Dendritic cell treated with granulocyte-macrophage colony-stimulating factor and Interleukin-4, amounts not matched to agents 40 ng/mL and 50 ng/mL, for 4 days (primary cell): ENCODE measurements at regions of chr4 and their contacts with region 1.

Region 1: GRCh38 chr4:7067452-7068278 is at the start of gene GRPEL1:
- H3K4me3 Mint-ChIP-seq: peak within 1 kb of the TSS; percentile 89
- H3K27ac Mint-ChIP-seq: peak within 1 kb of the TSS; percentile 92
- H3K4me1 Mint-ChIP-seq: peaks cover 46% of the 10 kb centered on the region
- H3K27me3 Mint-ChIP-seq: peaks cover 22% of the 10 kb centered on the region

Region 2: GRCh38 chr4:6716018-6716911 is 351.4 kb before region 1 on chr4 and contains the start of gene BLOC1S4:
- intact Hi-C with region 1: loop called (anchors 1 kb)
- H3K4me3 Mint-ChIP-seq: peak within 1 kb of the TSS; percentile 98
- H3K27ac Mint-ChIP-seq: peak within 1 kb of the TSS; percentile 97
- H3K4me1 Mint-ChIP-seq: peaks cover 34% of the 10 kb centered on the region
- H3K27me3 Mint-ChIP-seq: peaks cover 3% of the 10 kb centered on the region

Region 3: DNA sequence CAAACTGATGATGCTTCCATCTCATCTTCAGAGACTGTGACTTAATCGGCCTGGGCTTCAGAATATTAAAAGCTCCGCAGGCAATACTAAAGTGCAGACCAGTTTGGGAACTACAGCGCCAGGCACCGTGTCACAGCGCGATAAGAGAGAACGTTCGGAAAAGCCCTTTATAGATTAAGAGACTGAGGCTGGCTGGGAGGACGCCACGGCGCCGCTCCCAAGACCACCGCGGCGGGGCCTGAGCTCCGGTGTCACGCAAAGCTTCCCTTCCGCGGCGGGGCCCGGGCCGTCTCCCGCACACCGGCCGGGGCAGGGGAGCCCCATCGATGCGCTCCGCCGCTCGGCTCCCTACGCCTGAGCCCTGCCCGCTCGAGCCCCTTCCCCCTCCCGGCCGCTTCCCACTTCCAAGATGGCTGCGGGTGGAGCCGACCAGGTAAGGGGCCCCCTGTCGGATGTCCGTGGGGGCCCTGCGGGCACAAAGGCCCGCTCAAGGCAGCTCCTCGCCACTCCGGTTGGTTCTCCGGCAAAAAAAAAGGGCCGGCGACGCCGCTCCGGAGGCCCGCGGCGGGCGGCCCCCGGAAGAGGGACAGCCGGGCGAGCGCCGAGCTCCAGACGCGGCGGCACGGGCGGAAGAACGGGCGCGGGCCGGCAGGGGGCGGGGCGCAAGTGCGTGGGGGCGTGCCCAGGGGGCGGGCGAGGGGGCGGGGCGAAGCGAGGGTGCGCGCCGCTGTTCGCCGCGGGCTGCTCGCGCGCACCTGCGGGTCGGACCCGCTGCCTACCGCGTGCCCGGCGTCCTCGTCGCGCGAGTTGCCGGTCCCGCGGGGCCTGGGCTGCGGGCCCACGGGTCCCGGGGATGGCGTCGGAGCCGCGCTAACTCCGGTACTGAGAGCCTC is 158.3 kb before region 1 on chr4 and contains the start of gene TBC1D14:
- intact Hi-C with region 1: loop called (anchors 5 kb)
- H3K4me3 Mint-ChIP-seq: peak within 1 kb of the TSS; percentile 96
- H3K27ac Mint-ChIP-seq: peak within 1 kb of the TSS; percentile 98
- H3K4me1 Mint-ChIP-seq: peaks cover 76% of the 10 kb centered on the region
- H3K27me3 Mint-ChIP-seq: peaks cover 13% of the 10 kb centered on the region

Region 4: DNA sequence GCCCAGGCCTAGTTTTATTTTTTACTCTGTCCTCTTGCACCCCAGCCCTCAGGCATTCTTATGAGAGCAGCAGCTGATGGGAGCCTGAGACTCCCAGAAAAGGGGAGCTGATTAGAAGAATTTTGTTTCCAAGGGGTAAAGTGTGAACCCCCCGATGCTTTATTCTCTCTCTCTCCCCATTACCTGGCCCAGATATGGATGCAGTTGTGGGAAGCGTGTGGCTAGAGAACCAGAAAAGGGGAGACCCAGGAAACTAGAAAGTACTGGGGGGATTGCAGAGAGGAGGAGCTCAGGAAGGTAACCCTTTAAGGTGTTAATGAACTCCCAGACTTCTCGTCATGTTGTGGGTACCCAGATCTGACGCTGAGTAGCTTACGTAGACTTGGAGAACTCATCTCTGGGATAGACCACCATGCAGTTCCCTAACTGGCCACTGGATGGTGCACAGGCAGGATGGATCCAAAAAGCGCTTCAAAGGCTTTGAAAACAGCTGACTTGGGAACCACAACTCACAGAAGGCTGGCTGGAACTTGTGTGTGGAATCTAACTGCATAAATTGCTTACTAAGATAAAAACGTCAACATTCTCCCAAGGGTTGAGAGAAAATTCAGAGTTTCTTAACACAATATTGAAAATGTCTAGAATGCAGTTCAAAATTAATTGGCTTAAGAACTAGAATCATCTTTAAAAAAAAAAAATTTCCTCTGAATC is 93.4 kb before region 1 on chr4:
- intact Hi-C with region 1: loop called (anchors 5 kb)
- H3K4me3 Mint-ChIP-seq: no peak overlapping the region
- H3K27ac Mint-ChIP-seq: peak overlapping the region; percentile 34
- H3K4me1 Mint-ChIP-seq: peaks cover 31% of the 10 kb centered on the region
- H3K27me3 Mint-ChIP-seq: no peaks in the 10 kb centered on the region

Region 5: DNA sequence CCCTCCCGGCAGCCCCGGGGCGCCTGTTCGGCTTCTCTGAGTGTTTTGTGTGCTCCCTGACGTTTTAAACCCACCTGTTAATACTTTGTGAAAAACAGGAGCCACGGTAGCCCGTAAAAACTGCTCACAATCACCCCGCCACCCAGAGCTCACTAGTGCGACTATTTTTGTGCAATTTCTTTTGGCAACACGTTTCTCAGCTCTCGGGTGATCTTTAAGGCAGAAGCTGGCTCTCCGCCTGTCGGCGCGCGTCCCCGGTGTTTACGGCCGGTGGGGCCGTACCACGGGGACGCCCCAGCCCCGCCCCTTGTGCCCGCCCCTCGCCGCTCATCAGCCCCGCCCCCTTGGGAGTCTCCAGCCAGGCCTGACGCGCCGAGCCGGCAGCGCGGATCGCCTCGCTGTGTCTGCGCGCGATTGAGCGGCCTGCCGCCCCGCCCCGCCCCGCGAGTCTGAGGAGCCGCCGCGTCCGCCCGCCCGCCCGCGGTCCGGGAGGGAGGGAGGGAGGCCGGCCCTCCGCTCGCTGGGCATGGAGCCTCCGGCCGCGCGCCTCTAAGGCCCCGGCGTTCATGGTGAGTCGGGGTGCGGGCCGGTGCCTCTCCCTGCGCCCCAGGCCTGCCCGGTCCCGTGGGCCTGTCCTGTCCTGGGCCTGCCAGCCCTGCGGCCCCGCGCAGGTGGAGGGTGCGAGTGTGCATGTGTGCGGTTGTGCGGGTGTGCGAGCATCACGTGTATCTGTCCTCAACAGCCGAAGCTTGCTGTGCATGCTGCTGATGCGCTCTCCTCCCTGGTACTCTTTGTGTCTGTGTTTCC is 80.7 kb before region 1 on chr4:
- intact Hi-C with region 1: loop called (anchors 5 kb)
- H3K4me3 Mint-ChIP-seq: peak overlapping the region; percentile 81
- H3K27ac Mint-ChIP-seq: peak overlapping the region; percentile 92
- H3K4me1 Mint-ChIP-seq: peaks cover 89% of the 10 kb centered on the region
- H3K27me3 Mint-ChIP-seq: no peaks in the 10 kb centered on the region

Region 6: DNA sequence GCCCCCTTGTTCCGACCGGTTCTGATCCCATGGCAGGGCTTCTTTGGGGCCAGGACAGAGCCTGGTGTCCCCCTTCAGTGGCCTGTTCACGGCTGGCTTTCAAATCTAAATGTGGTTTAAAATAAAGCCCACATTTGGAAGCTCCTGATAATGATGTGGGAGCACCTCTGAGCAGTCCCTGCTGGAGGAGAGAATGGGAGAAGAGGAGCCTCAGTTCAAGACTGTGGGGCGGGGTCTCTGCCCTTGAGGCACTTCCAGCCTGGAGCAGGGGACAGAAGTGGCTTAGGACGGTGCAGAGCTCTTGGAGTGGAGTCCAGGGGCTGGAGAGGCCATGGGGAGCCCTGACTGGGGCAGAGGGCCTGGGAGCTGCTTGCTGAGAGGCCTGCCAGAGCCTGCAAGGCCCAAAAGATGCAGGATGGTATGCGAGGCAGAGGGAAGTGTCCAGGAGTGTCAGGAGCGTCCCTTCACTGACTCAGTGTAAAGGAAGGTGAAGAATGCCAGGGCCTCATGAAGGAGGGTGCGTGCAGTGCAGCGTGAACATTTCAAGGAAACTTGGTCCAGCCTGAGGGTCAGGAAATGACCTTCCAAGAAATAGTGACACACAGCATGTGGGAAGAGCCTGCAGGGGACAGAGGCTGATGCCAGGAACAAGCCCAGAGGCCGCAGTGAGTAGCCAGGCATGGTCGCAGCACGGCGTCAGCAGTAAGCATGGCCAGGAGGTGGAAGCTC is 45.6 kb before region 1 on chr4:
- intact Hi-C with region 1: no loop called
- H3K4me3 Mint-ChIP-seq: no peak overlapping the region
- H3K27ac Mint-ChIP-seq: no peak overlapping the region
- H3K4me1 Mint-ChIP-seq: peaks cover under 1% of the 10 kb centered on the region
- H3K27me3 Mint-ChIP-seq: no peaks in the 10 kb centered on the region

Region 7: GRCh38 chr4:7042697-7043464 is 24.8 kb before region 1 on chr4 and contains the start of gene TADA2B:
- intact Hi-C with region 1: loop called (anchors 1 kb)
- H3K4me3 Mint-ChIP-seq: peak within 1 kb of the TSS; percentile 82
- H3K27ac Mint-ChIP-seq: peak within 1 kb of the TSS; percentile 82
- H3K4me1 Mint-ChIP-seq: peaks cover 57% of the 10 kb centered on the region
- H3K27me3 Mint-ChIP-seq: no peaks in the 10 kb centered on the region